Dorsolateral prefrontal cortex (tissue), 120 donors: ENCODE measurements at regions of chr11 and their contacts with region 1.

Region 1: DNA sequence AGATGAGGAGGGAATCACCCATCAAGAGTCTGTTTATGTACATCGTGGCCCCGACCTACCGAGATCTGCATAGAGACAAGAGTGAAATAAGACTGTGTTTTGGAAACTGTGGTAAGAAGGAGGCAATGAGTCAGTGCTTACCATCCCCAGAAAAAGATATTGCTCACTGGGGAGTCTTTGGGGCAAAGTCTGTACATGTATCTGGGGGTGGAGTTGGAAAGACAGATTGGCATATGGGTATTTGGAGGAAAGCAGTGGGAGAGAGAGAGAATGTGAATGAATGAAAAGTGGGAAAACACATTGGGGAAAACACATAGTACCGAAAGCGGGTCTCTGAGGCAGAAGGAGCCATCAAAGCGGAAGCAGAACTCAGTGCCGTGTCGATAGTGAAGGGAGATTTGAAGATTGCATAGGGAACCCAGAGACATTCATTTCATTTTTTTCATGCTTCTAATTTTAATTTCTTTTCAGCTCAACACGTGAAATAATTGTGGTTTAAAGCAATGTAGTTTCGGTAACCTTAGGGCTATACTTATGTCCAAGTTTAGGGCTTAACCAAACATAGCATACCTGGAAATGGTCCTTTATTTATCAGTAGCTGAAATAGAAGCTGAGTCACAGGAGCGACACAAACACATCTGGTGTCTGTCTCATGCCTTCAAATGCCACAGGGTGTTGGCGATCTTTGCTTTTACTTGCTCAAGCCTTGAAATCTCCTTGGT is 98.6 kb upstream of the CD44 start:
- DNase-seq: no peak
- H3K4me3 ChIP-seq: peak overlapping the region in 9 of 59 donors; percentile 7 to 24 (median 18)
- H3K27ac ChIP-seq: no peak overlapping the region
- H3K27me3 ChIP-seq: peaks cover 0 to 3% (median 0%) of the 10 kb centered on the region in 45 donors
- CTCF ChIP-seq: no peak

Region 2: GRCh38 chr11:35305670-35306382 is 265.4 kb after region 1 on chr11:
- intact Hi-C with region 1: loop called in 1 of 2 experiments (anchors 5 kb)
- DNase-seq: no peak
- H3K4me3 ChIP-seq: no peak overlapping the region
- H3K27ac ChIP-seq: peak overlapping the region in 38 of 59 donors; percentile 5 to 87 (median 55)
- H3K27me3 ChIP-seq: no peaks in the 10 kb centered on the region
- CTCF ChIP-seq: peak in 44 of 56 donors; percentile 6 to 53 (median 34)